HAP-1 (cell line): ENCODE measurements at regions of chr2 and their contacts with region 1.

Region 1: DNA sequence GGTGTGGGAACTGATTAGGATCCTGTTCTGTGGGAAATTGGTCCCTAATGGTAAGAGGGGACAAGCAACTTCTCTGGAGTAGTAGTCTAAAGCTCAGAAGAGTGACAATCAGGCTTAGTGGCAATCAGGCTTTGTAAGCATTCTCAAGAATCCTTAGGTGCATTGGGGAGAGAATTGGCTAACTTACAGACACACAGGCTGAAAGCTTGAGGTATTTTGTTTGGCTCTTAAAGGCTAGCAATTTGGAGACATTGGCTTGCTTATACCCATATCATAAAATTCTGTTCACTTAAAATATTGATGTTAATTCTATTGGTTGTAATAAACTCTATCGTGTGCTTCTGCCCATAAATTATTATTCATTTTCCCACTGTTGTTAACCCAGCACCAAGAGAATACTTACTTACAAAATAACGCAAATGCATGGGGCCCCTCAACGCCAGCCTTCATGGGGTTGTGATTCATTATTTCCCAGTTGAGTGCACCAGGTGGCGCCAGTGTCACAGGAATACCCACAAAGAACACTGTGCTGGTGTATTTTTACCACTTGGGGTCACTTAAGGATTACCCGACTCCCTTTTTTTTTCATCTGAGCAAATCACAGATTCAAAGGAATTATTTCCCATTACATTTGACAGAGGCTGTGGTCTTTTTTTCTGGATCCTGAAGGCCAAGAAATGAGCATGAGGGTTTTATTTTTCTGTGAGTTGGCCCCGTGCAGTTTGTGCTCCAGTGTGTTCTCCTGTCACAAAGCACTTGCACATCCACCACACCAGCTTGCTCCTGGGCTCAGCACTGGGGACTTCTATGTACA is 45.5 kb downstream of the DDX1 start:
- DNase-seq: peak; percentile 51 to 71
- H3K4me3 ChIP-seq: no peak overlapping the region
- H3K4me1 ChIP-seq: no peaks in the 10 kb centered on the region
- H3K27me3 ChIP-seq: no peaks in the 10 kb centered on the region

Region 2: DNA sequence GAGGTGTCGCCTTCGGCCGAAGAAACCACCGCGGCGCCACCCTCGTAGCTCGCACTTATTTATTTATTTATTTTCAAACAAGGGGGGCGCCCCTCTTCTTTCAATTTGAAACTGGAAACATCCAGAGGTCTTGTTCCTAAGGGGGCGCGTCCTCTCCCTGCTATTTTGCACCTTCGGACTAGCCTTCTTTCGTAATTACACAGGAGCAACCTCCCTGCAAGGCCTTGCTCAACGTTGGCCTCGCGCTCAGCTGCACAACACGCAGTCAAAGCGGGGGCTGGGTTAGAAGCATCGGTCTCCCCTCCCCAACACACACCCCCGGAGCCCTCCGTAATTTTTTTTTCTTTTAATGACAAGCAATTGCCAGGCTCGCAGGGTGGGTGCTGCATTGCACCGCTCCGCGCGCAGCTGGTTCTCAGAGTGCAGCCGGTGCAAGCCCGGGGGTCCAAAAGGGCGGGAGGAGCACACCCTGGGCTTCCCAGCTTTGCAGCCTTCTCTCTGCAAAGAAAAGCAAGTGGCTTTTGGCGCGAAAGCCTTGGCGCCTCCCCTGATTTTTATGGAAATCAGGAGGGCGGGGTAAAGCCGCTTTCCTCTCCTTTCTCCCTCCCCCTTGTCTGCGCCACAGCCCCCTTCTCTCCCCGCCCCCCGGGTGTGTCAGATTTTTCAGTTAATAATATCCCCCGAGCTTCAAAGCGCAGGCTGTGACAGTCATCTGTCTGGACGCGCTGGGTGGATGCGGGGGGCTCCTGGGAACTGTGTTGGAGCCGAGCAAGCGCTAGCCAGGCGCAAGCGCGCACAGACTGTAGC is 302.9 kb after region 1 on chr2 and contains the start of gene MYCN:
- in situ Hi-C with region 1: loop called (anchors 25 kb)
- DNase-seq: peak; percentile 91 to 94
- H3K4me3 ChIP-seq: peak within 1 kb of the TSS; percentile 56
- H3K4me1 ChIP-seq: peaks cover 23% of the 10 kb centered on the region
- H3K27me3 ChIP-seq: no peaks in the 10 kb centered on the region

Region 3: GRCh38 chr2:16281451-16282336 is 644.5 kb after region 1 on chr2:
- in situ Hi-C with region 1: loop called (anchors 25 kb)
- DNase-seq: peak; percentile 51 to 67
- H3K4me3 ChIP-seq: no peak overlapping the region
- H3K4me1 ChIP-seq: no peaks in the 10 kb centered on the region
- H3K27me3 ChIP-seq: peaks cover 5% of the 10 kb centered on the region

Region 4: DNA sequence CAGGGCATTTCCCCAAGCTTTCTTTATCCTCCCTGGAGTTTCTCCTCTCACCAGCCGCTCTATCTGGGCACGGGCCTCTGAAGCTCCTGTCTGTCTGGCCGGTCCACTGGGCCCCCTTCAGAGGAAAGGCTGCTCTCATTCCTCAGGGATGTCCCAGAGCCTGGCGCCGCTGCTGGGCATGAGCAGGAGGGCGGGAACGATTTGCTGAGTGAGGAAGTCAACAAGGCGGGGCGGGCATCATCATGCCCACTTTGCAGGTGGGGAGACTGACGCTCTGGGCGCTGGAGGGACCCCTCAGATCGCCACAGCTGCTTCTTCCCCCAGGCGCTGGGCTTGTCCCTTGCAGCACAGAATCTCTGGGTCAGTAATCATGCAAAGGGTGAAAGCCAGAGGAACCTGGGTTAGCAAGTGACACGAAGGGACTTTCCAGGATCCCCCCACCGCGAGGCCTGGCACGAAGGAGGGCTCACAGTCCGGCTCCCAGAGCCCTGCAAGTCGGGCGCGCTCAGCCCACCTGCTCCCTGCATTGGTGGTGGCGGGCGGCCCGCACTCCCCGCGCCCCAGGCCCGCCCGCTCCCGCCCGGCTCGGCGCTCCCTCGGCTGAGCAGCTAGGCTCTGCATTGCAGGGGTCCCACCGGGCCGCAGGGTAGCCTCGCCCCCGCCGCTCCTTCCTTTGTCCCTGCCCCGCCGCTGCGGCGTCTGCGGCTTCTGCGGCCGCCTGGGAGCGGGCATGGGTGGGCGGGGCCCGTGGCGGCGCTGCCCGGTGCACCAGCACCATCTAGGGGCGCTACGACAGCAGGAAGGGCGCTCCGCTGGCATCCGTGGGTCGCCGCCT is 870.7 kb after region 1 on chr2:
- in situ Hi-C with region 1: loop called (anchors 5 kb)
- DNase-seq: peak; percentile 29 to 71
- H3K4me3 ChIP-seq: peak overlapping the region; percentile 11; the same call in 1 of the 2 replicates
- H3K4me1 ChIP-seq: no peaks in the 10 kb centered on the region
- H3K27me3 ChIP-seq: peaks cover 10% of the 10 kb centered on the region

Region 5: GRCh38 chr2:16756831-16757644 is 1119.9 kb after region 1 on chr2:
- in situ Hi-C with region 1: loop called (anchors 10 kb)
- DNase-seq: peak; percentile 76 to 80
- H3K4me3 ChIP-seq: no peak overlapping the region
- H3K4me1 ChIP-seq: no peaks in the 10 kb centered on the region
- H3K27me3 ChIP-seq: peaks cover 4% of the 10 kb centered on the region; the same call in 1 of the 2 replicates